GM12878 (cell line): ENCODE measurements at regions of chr10 and their contacts with region 1.

Region 1: GRCh38 chr10:24901686-24902399 is 50.6 kb downstream of the PRTFDC1 start:
- DNase-seq: peak; percentile 43
- ATAC-seq: peak; percentile 66
- H3K4me3 ChIP-seq: peak overlapping the region; percentile 28; the same call in 1 of the 2 replicates
- H3K27ac ChIP-seq: peak overlapping the region; percentile 59
- H3K4me1 ChIP-seq: peaks cover 20% of the 10 kb centered on the region
- H3K27me3 ChIP-seq: no peaks in the 10 kb centered on the region
- CTCF ChIP-seq: no peak
- EP300 ChIP-seq: 0 out of 4 replicates have a peak, but pooled peaks of 1 of the 2 experiments have one; percentile 31
- POLR2A ChIP-seq: no peak
- RAD21 ChIP-seq: no peak

Region 2: DNA sequence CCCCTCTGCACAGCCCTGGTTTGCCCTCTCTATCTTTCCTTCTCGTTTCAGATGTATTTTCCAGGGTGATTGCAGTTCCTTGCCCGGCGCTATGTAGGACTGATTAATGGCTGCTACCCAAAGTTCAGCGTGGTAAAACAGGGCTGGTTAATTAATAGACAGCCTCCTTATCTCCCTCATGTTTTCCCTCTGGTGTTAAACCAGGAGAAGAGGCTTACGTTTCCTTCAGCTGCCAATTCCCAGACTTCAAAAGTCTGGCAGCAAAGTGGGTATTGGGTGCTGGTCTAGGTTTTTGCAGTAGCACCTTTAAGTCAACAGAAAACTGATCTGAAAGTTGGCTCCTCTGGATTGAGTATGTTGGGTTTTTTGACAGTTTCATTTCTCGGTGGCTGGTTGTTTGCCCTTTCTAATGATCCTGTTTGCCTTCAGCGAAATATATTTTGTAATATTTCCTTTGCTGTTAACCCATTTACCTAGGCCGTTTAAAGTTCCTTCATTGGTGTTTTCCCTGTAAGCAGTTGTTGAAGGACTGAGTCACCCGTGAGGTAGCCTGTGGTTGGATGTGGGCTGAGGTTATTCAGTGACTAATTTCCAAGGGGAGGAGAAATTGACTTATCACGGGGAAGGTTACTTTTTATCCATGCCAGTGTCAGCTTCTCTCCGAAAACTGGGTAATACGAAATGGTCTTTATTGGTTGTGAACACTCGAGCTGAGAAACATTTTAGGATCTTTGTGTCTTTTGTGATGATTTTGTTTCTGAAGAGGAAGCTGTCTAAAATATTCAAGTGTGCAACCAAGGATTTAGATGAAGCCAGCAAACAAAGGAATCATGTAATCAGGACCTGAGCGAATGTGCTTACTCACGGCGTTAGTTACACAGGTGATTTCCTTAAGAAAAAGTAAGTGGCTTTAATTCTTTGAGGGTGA is 435.7 kb before region 1 on chr10:
- CTCF ChIA-PET with region 1: no interaction called
- POLR2A ChIA-PET with region 1: no interaction called
- RAD21 ChIA-PET with region 1: no interaction called
- SMC1A ChIA-PET with region 1: no interaction called
- in situ Hi-C with region 1: no loop called
- intact Hi-C with region 1: no loop called
- DNase-seq: peak; percentile 45
- ATAC-seq: peak; percentile 82
- H3K4me3 ChIP-seq: no peak overlapping the region
- H3K27ac ChIP-seq: no peak overlapping the region
- H3K4me1 ChIP-seq: peaks cover 15% of the 10 kb centered on the region
- H3K27me3 ChIP-seq: no peaks in the 10 kb centered on the region
- CTCF ChIP-seq: no peak
- EP300 ChIP-seq: peak; percentile 11 to 37; a peak in 1 of 4 replicates
- POLR2A ChIP-seq: no peak
- RAD21 ChIP-seq: no peak

Region 3: DNA sequence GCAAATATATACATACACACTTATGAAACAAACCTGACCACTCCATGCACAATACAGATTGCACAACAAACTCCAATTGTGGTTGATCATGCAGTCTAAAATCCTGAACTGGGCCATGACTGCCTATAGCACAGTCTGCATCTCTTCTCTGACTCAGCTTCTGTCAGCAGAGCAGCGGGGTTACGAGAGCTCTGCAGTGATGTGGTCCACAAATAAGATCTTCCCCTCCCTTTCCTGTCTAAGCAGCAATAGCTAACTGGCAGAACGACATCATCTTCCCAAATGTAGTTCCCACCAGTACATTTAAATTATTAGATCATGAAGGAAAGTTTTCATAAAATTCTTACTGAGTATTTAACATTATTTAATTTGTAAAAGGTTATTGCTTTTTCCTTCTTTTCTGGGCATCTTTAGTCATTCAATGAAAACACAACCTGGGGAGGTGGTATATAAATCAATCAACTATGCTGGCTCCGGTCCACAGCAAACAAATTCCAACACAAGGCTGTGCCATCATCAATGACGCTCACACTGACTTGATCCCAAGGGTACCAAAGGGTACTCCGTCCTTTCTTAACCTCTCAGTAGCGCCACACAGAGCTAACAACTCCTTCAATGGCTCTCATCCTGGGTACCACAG is 195.2 kb before region 1 on chr10:
- CTCF ChIA-PET with region 1: no interaction called
- POLR2A ChIA-PET with region 1: no interaction called
- RAD21 ChIA-PET with region 1: interaction called, 5 read pairs
- SMC1A ChIA-PET with region 1: interaction called, 13 read pairs
- in situ Hi-C with region 1: no loop called
- intact Hi-C with region 1: no loop called
- DNase-seq: no peak
- ATAC-seq: peak; percentile 81
- H3K4me3 ChIP-seq: no peak overlapping the region
- H3K27ac ChIP-seq: no peak overlapping the region
- H3K4me1 ChIP-seq: peaks cover 9% of the 10 kb centered on the region; the same call in 1 of the 2 replicates
- H3K27me3 ChIP-seq: no peaks in the 10 kb centered on the region
- CTCF ChIP-seq: no peak
- EP300 ChIP-seq: no peak
- POLR2A ChIP-seq: no peak
- RAD21 ChIP-seq: no peak

Region 4: GRCh38 chr10:24866604-24867583 is 34.9 kb before region 1 on chr10:
- CTCF ChIA-PET with region 1: interaction called, 4 read pairs
- POLR2A ChIA-PET with region 1: no interaction called
- RAD21 ChIA-PET with region 1: interaction called, 12 read pairs
- SMC1A ChIA-PET with region 1: interaction called, 4 read pairs
- in situ Hi-C with region 1: no loop called
- intact Hi-C with region 1: no loop called
- DNase-seq: no peak
- ATAC-seq: peak; percentile 26; the same call in 2 of the 3 replicates
- H3K4me3 ChIP-seq: no peak overlapping the region
- H3K27ac ChIP-seq: no peak overlapping the region
- H3K4me1 ChIP-seq: no peaks in the 10 kb centered on the region
- H3K27me3 ChIP-seq: no peaks in the 10 kb centered on the region
- CTCF ChIP-seq: no peak
- EP300 ChIP-seq: no peak
- POLR2A ChIP-seq: no peak
- RAD21 ChIP-seq: no peak

Region 5: DNA sequence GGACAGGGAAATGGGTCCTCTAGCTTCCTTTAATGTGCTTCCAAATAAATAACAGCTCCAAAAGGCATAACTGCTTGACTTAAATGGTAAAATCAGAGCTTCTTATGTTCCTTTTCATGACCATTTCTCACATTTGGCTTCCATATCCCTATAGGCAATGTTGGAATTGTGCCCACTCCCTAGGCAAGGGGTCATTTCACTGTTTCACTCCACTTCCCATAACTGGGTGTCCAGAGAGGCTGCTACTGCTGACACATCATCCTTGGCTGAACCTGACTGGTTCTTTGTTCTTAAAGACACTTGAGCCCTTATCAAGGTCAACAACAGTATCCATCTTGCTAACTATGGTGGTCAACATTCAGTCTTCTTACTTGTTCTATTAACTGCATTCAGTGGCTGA is 13.5 kb after region 1 on chr10:
- CTCF ChIA-PET with region 1: interaction called, 25 read pairs
- POLR2A ChIA-PET with region 1: interaction called, 12 read pairs
- RAD21 ChIA-PET with region 1: interaction called, 38 read pairs
- SMC1A ChIA-PET with region 1: interaction called, 88 read pairs
- in situ Hi-C with region 1: no loop called
- intact Hi-C with region 1: loop called (anchors 2 kb)
- DNase-seq: no peak
- ATAC-seq: no peak
- H3K4me3 ChIP-seq: no peak overlapping the region
- H3K27ac ChIP-seq: no peak overlapping the region
- H3K4me1 ChIP-seq: no peaks in the 10 kb centered on the region
- H3K27me3 ChIP-seq: no peaks in the 10 kb centered on the region
- CTCF ChIP-seq: no peak
- EP300 ChIP-seq: no peak
- POLR2A ChIP-seq: no peak
- RAD21 ChIP-seq: no peak

Region 6: GRCh38 chr10:24952707-24953645 is 51.1 kb after region 1 on chr10:
- CTCF ChIA-PET with region 1: interaction called, 5 read pairs
- POLR2A ChIA-PET with region 1: interaction called, 7 read pairs
- RAD21 ChIA-PET with region 1: interaction called, 45 read pairs
- SMC1A ChIA-PET with region 1: interaction called, 39 read pairs
- in situ Hi-C with region 1: no loop called
- intact Hi-C with region 1: no loop called
- DNase-seq: no peak
- ATAC-seq: peak; percentile 72
- H3K4me3 ChIP-seq: peak overlapping the region; percentile 66; the same call in 1 of the 2 replicates
- H3K27ac ChIP-seq: no peak overlapping the region
- H3K4me1 ChIP-seq: peaks cover under 1% of the 10 kb centered on the region; the same call in 1 of the 2 replicates
- H3K27me3 ChIP-seq: no peaks in the 10 kb centered on the region
- CTCF ChIP-seq: peak; percentile 20 to 53 (median 24); a peak in 4 of 6 replicates
- EP300 ChIP-seq: no peak
- POLR2A ChIP-seq: peak; percentile 51
- RAD21 ChIP-seq: peak; percentile 49

Region 7: DNA sequence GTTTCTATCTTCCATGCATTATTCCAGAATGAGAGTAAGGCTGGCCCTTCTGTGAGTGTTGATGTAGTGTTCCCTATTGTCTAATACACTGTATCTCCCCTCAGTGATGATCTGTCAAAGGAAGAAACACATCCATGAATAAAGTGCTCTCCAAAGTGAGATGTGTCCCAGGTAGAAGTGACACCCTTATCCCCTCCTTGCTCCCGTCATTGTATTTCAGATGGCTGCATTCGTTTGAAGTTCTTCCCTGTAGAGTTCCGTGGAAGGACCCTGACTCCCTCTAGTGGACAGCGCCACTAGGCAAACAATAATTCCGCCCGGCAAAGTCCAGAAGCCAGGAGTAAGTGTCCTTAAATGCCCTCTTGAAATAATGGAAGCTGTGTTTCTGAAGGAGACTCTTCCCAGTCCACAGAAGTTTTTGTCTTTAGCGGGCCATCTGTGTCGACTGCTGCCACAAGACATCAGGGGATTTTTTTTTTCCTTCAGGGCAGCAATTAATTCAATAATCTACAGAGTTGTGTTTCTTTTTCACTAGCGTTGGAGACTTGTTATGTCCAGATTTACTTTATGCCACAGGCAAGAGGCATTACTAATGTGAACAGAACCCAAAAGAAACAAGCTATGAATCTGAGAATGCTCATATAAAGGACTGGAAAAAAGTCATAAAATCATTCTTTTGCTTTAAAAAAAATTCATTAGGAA is 179.2 kb after region 1 on chr10:
- CTCF ChIA-PET with region 1: interaction called, 7 read pairs
- POLR2A ChIA-PET with region 1: no interaction called
- RAD21 ChIA-PET with region 1: interaction called, 7 read pairs
- SMC1A ChIA-PET with region 1: interaction called, 6 read pairs
- in situ Hi-C with region 1: no loop called
- intact Hi-C with region 1: loop called (anchors 2 kb)
- DNase-seq: peak; percentile 30
- ATAC-seq: peak; percentile 90
- H3K4me3 ChIP-seq: no peak overlapping the region
- H3K27ac ChIP-seq: no peak overlapping the region
- H3K4me1 ChIP-seq: peaks cover 4% of the 10 kb centered on the region; the same call in 1 of the 2 replicates
- H3K27me3 ChIP-seq: no peaks in the 10 kb centered on the region; a peak in 1 of 4 replicates
- CTCF ChIP-seq: peak; percentile 90 to 92 (median 91)
- EP300 ChIP-seq: no peak
- POLR2A ChIP-seq: no peak
- RAD21 ChIP-seq: peak; percentile 96